Naive thymus-derived CD4-positive, alpha-beta T cell (primary cell): ENCODE measurements at regions of chr9 and their contacts with region 1.

Region 1: GRCh38 chr9:128088253-128088945 is 20.4 kb downstream of the SLC25A25 start:
- DNase-seq: peak in 3 of 9 donors; percentile 26 to 51 (median 36)
- ATAC-seq: peak; percentile 55
- H3K4me3 ChIP-seq: no peak overlapping the region
- H3K4me3 Mint-ChIP-seq: peak overlapping the region; percentile 20 to 80 (median 56)
- H3K27ac ChIP-seq: peak overlapping the region; percentile 53
- H3K27ac Mint-ChIP-seq: peak overlapping the region; percentile 41 to 97 (median 83)
- H3K4me1 ChIP-seq: peaks cover 16 to 52% of the 10 kb centered on the region in 2 donors
- H3K4me1 Mint-ChIP-seq: peaks cover 53 to 75% (median 61%) of the 10 kb centered on the region in 7 donors
- H3K27me3 ChIP-seq: no peaks in the 10 kb centered on the region
- H3K27me3 Mint-ChIP-seq: no peaks in the 10 kb centered on the region

Region 2: GRCh38 chr9:127921557-127922120 is 166.8 kb before region 1 on chr9:
- CTCF ChIA-PET with region 1: no interaction called
- POLR2A ChIA-PET with region 1: no interaction called
- intact Hi-C with region 1: no loop called
- DNase-seq: peak; percentile 58 to 82 (median 72)
- ATAC-seq: peak; percentile 60
- H3K4me3 ChIP-seq: no peak overlapping the region
- H3K4me3 Mint-ChIP-seq: peak overlapping the region in 7 of 10 donors; percentile 6 to 63 (median 58)
- H3K27ac ChIP-seq: no peak overlapping the region
- H3K27ac Mint-ChIP-seq: peak overlapping the region in 4 of 9 donors; percentile 6 to 57 (median 18)
- H3K4me1 ChIP-seq: peaks cover 14 to 30% of the 10 kb centered on the region in 2 donors
- H3K4me1 Mint-ChIP-seq: peaks cover 20 to 40% (median 30%) of the 10 kb centered on the region in 7 donors
- H3K27me3 ChIP-seq: no peaks in the 10 kb centered on the region
- H3K27me3 Mint-ChIP-seq: peaks cover 0 to 32% (median 0%) of the 10 kb centered on the region in 5 donors

Region 3: DNA sequence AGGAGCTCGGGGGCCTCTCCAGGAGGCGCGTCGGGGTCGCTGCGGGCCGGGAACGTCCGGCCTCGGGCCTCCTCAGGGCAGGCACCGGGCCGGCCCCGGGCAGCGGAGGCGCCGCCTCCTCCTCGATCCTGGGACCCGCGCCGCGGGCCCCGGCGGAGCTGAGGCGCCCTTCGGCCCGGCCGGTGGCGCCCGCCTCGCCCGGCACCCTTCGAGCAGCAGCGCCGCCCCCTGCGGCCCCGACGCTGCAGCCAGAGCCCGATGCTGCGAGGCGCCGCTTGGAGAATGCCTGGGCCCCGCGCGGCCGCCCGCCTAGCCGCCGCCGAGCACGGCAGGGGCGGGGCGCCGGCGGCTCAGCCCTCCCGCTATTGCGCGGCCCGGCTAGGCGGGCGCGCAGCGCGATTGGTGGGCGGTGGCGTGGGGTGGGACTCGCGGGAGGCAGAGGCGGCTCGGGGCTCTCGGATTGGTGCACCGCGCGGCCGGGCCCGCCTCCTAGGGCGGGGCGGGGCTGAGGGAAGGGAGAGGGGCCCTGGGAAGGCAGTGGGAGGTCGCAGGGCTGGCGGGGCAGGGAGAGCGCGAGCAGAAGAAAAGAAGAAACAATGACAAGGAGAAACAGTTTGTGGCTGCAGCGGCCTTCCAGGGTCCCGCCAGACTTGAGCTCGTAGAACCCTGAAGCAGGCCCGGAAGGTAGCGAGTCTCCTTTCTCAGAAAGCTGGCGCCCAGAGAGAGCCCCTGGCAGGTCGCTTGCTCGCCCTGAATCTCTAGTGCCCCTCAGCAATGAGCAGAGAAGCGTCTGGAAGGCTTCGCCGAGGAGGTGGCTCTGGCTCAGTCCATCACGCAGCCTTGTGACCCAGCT is 107.5 kb before region 1 on chr9 and contains the start of gene EEIG1:
- CTCF ChIA-PET with region 1: no interaction called
- POLR2A ChIA-PET with region 1: no interaction called
- intact Hi-C with region 1: no loop called
- DNase-seq: peak; percentile 95 to 100 (median 99)
- ATAC-seq: peak; percentile 96
- H3K4me3 ChIP-seq: peak within 1 kb of the TSS; percentile 93
- H3K4me3 Mint-ChIP-seq: peak within 1 kb of the TSS; percentile 93 to 99 (median 98)
- H3K27ac ChIP-seq: peak within 1 kb of the TSS; percentile 84
- H3K27ac Mint-ChIP-seq: peak within 1 kb of the TSS; percentile 92 to 100 (median 98)
- H3K4me1 ChIP-seq: peaks cover 25 to 38% of the 10 kb centered on the region in 2 donors
- H3K4me1 Mint-ChIP-seq: peaks cover 35 to 47% (median 42%) of the 10 kb centered on the region in 7 donors
- H3K27me3 ChIP-seq: no peaks in the 10 kb centered on the region
- H3K27me3 Mint-ChIP-seq: no peaks in the 10 kb centered on the region
- total RNA-seq, gene EEIG1: 252 to 664 (median 347) TPM

Region 4: DNA sequence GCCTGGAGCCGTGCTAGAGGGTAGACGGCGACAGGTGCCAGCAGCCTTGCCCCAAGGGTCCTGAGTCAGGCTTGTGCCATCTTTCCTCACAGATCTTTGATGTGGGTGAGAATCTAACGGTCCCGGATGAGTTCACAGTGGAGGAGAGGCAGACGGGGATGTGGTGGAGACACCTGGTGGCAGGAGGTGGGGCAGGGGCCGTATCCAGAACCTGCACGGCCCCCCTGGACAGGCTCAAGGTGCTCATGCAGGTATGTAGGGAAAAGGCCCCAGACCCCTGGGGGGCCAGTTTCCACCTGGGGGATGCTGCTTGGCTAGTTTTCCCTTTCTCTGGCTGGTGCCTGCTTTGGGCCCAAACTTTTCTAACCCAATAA is 15.2 kb after region 1 on chr9:
- CTCF ChIA-PET with region 1: interaction called, 10 read pairs
- POLR2A ChIA-PET with region 1: interaction called, 9 read pairs
- intact Hi-C with region 1: loop called in 1 of 2 experiments (anchors 1 kb)
- DNase-seq: peak in 7 of 9 donors; percentile 27 to 52 (median 50)
- ATAC-seq: peak; percentile 77
- H3K4me3 ChIP-seq: no peak overlapping the region
- H3K4me3 Mint-ChIP-seq: peak overlapping the region in 7 of 10 donors; percentile 5 to 56 (median 36)
- H3K27ac ChIP-seq: peak overlapping the region; percentile 3
- H3K27ac Mint-ChIP-seq: peak overlapping the region in 8 of 9 donors; percentile 60 to 89 (median 74)
- H3K4me1 ChIP-seq: peaks cover 6 to 41% of the 10 kb centered on the region in 2 donors
- H3K4me1 Mint-ChIP-seq: peaks cover 36 to 68% (median 46%) of the 10 kb centered on the region in 7 donors
- H3K27me3 ChIP-seq: no peaks in the 10 kb centered on the region
- H3K27me3 Mint-ChIP-seq: no peaks in the 10 kb centered on the region